Activated CD4-positive, alpha-beta memory T cell treated with anti-CD3 and anti-CD28 coated beads for 36 hours (primary cell): ENCODE measurements at regions of chr2 and their contacts with region 1.

Region 1: DNA sequence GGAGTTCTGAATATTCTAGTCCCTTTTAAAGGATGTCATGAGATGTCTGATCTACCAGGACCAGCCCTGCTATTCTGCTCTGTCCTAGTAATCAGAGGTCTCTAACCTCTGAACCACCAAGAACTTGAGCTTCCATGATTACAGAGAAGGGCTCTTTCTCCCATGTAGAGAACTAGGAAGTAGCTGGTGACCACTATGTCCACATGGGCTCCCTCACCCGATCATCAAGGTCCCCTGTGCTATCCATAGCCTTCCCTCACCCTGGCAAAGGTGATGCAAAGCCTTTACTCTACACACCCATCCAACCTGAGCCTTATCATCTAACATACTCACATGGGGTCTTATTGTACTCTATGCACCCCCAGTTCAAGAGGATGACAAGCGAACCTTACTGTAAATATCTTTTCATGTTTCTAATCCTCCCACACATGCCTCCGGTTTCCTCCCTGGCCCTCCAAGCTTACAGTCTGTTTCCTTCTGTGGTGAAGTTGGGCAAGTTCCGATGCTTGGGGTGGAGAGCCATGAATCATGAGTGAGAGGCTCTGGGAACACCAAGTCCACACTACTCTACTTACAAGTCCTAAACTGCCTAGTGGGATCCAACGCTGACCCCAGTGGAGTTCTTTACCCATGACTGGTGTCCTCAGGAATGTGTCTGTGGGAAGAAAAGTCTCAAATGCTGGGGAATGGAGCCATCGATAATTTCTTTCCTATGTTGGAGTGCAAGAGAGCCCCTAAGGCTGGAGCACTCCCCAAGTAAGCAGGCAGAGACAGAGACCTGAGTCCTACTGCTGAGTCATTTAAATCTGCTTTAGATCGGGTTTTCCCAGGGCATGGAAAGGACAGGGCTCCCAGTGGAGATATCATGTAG is 73.3 kb upstream of the KLF7 start:
- DNase-seq: peak; percentile 69
- H3K4me3 Mint-ChIP-seq: no peak overlapping the region
- H3K27ac Mint-ChIP-seq: no peak overlapping the region
- H3K4me1 Mint-ChIP-seq: peaks cover 25% of the 10 kb centered on the region
- H3K27me3 Mint-ChIP-seq: peaks cover 1% of the 10 kb centered on the region

Region 2: DNA sequence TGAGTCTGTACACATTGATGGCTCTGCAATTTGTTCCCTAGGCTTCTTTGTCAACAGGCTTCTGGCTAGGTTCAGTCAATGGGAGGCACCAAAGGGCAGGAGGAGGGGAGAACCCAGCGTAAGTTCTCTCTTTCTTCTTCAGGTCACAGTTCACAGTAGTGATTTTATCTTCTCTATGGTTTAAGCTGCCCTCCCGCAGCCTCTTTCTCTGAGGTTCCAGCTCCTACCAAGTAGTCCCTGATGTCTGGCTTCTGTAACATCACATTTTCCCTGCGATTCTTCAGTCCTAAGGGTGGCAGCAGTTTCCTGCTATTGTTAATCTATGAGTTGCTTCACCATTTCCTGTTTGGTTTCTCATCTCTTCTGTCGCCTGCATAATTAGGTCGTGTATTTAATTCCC is 192.3 kb before region 1 on chr2:
- CTCF ChIA-PET with region 1: no interaction called
- POLR2A ChIA-PET with region 1: no interaction called
- intact Hi-C with region 1: loop called (anchors 5 kb)
- DNase-seq: peak; percentile 41
- H3K4me3 Mint-ChIP-seq: no peak overlapping the region
- H3K27ac Mint-ChIP-seq: peak overlapping the region; percentile 1
- H3K4me1 Mint-ChIP-seq: peaks cover 12% of the 10 kb centered on the region
- H3K27me3 Mint-ChIP-seq: no peaks in the 10 kb centered on the region

Region 3: GRCh38 chr2:207194017-207194416 is 45.0 kb before region 1 on chr2:
- CTCF ChIA-PET with region 1: no interaction called
- POLR2A ChIA-PET with region 1: no interaction called
- intact Hi-C with region 1: no loop called
- DNase-seq: no peak
- H3K4me3 Mint-ChIP-seq: no peak overlapping the region
- H3K27ac Mint-ChIP-seq: no peak overlapping the region
- H3K4me1 Mint-ChIP-seq: no peaks in the 10 kb centered on the region
- H3K27me3 Mint-ChIP-seq: peaks cover 6% of the 10 kb centered on the region

Region 4: DNA sequence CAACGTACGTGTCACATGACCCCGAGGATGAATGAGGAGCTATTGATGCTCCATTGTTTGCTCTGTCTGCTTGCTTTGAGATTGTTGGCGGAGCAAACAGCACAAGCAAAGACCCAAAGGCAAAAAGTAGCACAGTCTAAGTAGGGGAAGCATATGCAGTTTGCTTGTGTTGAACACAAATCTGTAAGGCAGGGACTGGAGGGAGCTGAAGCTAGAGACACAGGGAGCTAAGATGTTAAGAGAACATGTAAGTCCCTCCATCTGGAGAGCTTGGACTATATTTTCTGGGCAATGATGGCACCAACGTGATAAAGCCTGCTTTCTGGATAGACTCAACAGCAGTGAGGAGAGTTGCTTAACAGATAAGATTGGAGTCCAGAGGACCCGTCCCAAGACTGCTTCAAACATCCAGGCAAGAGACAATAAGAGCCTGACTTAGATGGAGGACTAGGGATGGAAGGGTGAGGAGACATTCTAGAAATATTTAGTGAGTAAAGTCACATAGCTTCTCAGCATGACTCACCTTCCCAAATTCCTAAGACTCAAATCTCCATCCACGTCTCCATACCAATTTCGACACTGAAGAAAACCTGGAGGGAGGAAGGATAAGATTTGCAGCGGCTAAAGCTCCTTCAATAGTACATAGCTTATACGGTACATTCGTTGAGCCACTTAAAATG is 14.7 kb after region 1 on chr2:
- CTCF ChIA-PET with region 1: interaction called, 6 read pairs
- POLR2A ChIA-PET with region 1: no interaction called
- intact Hi-C with region 1: loop called (anchors 1 kb)
- DNase-seq: no peak
- H3K4me3 Mint-ChIP-seq: no peak overlapping the region
- H3K27ac Mint-ChIP-seq: peak overlapping the region; percentile 9
- H3K4me1 Mint-ChIP-seq: peaks cover 56% of the 10 kb centered on the region
- H3K27me3 Mint-ChIP-seq: peaks cover 7% of the 10 kb centered on the region

Region 5: DNA sequence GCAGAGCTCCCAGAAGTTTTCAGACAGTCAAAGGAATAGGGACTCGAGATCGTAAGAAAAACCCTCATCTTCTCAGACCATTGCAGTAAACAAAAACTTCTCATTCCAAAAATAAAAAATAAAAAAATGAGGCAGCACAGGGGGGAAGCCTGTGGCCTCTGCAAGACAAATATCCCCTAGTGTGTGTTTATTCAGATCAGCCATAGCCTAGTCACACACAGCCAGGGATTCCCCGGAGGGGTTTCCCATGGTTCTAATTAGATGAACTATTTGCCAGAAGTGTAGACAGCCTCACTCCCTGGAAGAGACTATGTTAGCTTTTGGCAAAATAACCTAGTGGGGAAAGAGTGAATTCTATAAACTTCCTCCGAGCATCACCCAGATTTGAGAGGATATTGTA is 49.6 kb after region 1 on chr2:
- CTCF ChIA-PET with region 1: no interaction called
- POLR2A ChIA-PET with region 1: interaction called, 3 read pairs
- intact Hi-C with region 1: loop called (anchors 1 kb)
- DNase-seq: peak; percentile 76
- H3K4me3 Mint-ChIP-seq: no peak overlapping the region
- H3K27ac Mint-ChIP-seq: peak overlapping the region; percentile 9
- H3K4me1 Mint-ChIP-seq: peaks cover 80% of the 10 kb centered on the region
- H3K27me3 Mint-ChIP-seq: peaks cover 4% of the 10 kb centered on the region

Region 6: GRCh38 chr2:207317378-207317984 is 78.4 kb after region 1 on chr2:
- CTCF ChIA-PET with region 1: no interaction called
- POLR2A ChIA-PET with region 1: no interaction called
- intact Hi-C with region 1: loop called (anchors 1 kb)
- DNase-seq: no peak
- H3K4me3 Mint-ChIP-seq: no peak overlapping the region
- H3K27ac Mint-ChIP-seq: peak overlapping the region; percentile 83
- H3K4me1 Mint-ChIP-seq: peaks cover 30% of the 10 kb centered on the region
- H3K27me3 Mint-ChIP-seq: peaks cover 3% of the 10 kb centered on the region